HCT116 (cell line): ENCODE measurements at regions of chr11 and their contacts with region 1.

Region 1: DNA sequence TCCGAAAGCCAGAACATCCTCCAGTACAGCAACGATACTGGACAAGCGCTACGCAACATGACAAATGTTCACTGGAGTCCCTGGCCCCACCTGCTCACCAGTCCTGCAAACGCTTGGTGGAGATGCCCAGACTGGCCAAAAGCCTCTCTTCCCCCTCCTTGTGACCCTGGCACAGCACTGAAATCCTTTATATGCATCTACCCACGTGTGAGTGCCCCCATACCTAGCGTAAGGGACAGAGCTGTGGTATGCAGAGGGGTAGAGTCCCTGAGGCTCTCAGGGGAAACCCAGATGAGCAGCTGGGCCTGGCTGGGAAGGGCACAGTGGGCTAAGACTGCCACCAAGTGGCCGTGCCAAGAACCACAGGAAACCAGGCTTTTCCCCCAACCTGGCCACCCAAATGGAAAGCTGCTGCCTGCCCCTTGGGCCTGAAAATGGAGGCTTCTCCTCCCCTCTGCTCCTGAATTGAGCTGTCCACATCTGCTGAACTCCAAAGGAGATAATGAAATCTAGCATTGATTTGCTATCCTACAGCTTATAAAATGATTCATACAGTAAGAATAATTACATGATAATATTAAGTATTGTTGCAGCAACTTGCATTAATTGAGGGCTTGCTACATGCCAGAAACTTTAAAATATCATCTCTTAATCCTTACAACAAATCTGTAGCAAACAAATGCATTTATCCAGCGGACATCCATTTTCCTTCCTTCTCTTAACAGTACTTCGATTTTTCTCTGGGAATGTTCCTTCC is 24.8 kb upstream of the TTC12 start:
- DNase-seq: peak; percentile 21
- ATAC-seq: peak; percentile 96
- H3K4me3 ChIP-seq: no peak overlapping the region
- H3K27ac ChIP-seq: no peak overlapping the region
- H3K4me1 ChIP-seq: no peaks in the 10 kb centered on the region
- H3K27me3 ChIP-seq: peaks cover 44% of the 10 kb centered on the region
- CTCF ChIP-seq: peak; percentile 60 to 90 (median 88)
- POLR2A ChIP-seq: no peak
- RAD21 ChIP-seq: peak; percentile 90

Region 2: DNA sequence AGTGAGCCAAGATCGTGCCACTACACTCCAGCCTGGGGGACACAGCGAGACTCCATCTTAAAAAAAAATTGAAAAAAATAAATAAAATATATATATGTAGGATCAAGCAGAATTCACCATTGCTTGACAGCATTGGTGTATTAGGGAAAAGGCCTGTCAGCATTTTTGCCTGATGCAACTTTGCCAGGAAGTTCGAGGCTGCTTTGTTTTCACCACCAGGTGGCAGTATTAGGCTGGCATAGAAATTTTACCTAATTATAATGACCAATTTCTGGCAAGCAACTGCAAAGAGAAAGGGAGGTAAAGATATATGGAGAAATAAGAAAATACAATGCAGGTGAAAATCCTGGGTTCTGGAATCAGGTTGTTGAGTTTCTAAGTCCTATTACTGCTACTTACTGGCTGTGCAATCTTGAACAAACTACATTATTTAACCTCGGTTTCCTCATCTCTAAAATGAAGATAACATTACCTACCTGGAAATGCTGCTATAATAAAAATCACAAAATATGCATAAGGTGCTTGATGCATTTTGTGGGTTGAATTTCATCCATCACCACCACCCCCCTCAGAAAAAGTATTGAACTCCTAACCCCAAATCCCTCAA is 1724.4 kb before region 1 on chr11:
- CTCF ChIA-PET with region 1: no interaction called
- POLR2A ChIA-PET with region 1: no interaction called
- RAD21 ChIA-PET with region 1: no interaction called
- intact Hi-C with region 1: loop called (anchors 10 kb)
- DNase-seq: peak; percentile 63
- ATAC-seq: peak; percentile 70
- H3K4me3 ChIP-seq: no peak overlapping the region
- H3K27ac ChIP-seq: no peak overlapping the region
- H3K4me1 ChIP-seq: peaks cover 0 to 7% of the 10 kb centered on the region in 2 experiments; a peak in 1 of 4 replicates
- H3K27me3 ChIP-seq: no peaks in the 10 kb centered on the region
- CTCF ChIP-seq: peak; percentile 81 to 87 (median 84)
- POLR2A ChIP-seq: no peak
- RAD21 ChIP-seq: peak; percentile 91

Region 3: GRCh38 chr11:112795142-112795815 is 494.3 kb before region 1 on chr11:
- CTCF ChIA-PET with region 1: interaction called, 10 read pairs
- POLR2A ChIA-PET with region 1: no interaction called
- RAD21 ChIA-PET with region 1: no interaction called
- intact Hi-C with region 1: loop called (anchors 5 kb)
- DNase-seq: peak; percentile 38
- ATAC-seq: peak; percentile 97
- H3K4me3 ChIP-seq: no peak overlapping the region
- H3K27ac ChIP-seq: no peak overlapping the region
- H3K4me1 ChIP-seq: no peaks in the 10 kb centered on the region
- H3K27me3 ChIP-seq: 0 out of 2 replicates have a peak, but pooled peaks cover 5% of the 10 kb centered on the region
- CTCF ChIP-seq: peak; percentile 69 to 91 (median 82); a peak in 5 of 6 replicates
- POLR2A ChIP-seq: no peak
- RAD21 ChIP-seq: peak; percentile 67

Region 4: DNA sequence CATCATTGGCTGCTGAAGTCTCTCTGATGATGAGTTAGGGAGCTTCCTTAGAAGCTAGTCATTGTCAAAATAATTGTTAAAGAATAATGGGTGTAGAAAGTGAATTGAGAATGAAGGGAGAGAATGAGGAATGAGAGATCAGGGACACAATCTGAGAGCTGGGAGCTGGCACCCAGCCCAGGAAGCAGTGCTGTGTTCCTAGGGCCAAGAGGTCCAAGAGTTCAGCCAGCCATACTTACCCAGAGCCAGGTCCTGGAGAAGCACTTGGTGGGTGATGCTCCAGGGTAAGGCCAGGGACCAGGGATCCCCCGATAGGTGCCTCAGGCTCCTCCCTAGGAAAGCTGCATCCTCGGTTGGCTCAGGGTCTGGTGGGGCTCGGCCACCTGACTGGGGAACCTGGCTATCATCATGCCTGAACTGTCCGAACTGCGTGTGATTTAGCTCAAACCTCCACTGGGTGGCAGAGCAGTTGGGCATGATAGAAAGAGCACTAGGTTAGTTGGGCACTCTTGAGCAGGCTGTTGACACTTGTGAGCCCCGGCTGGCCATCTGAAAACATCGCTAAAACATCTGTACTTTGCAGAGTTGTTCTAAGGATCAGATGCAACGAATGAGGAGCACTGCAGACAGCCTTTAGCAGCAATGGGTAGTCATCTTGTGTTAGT is 452.3 kb before region 1 on chr11:
- CTCF ChIA-PET with region 1: no interaction called
- POLR2A ChIA-PET with region 1: no interaction called
- RAD21 ChIA-PET with region 1: no interaction called
- intact Hi-C with region 1: loop called (anchors 2 kb)
- DNase-seq: peak; percentile 6
- ATAC-seq: peak; percentile 83
- H3K4me3 ChIP-seq: no peak overlapping the region
- H3K27ac ChIP-seq: no peak overlapping the region
- H3K4me1 ChIP-seq: no peaks in the 10 kb centered on the region
- H3K27me3 ChIP-seq: peaks cover 30% of the 10 kb centered on the region
- CTCF ChIP-seq: peak; percentile 14 to 33 (median 31); a peak in 2 of 6 replicates
- POLR2A ChIP-seq: no peak
- RAD21 ChIP-seq: peak; percentile 38; the same call in 1 of the 2 replicates

Region 5: DNA sequence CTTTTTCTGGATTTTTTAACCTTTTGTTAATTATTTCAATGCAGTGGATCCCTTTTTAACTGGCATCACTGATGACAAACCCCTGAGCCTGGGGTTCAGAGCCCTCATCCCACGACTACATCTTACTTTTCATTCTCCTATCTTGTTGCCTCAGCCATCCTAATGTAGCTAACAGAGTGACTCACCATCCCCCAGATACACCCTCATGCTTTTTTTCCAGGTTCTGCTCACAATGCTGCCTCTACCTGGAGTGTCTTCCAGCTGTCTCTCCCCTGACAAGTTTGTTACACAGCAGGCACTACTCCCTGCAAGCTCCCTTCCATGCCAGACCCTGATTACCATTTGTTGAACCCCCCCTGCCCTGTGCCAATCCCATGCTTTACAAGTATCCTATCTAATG is 193.0 kb before region 1 on chr11:
- CTCF ChIA-PET with region 1: no interaction called
- POLR2A ChIA-PET with region 1: no interaction called
- RAD21 ChIA-PET with region 1: no interaction called
- intact Hi-C with region 1: no loop called
- DNase-seq: no peak
- ATAC-seq: no peak
- H3K4me3 ChIP-seq: no peak overlapping the region
- H3K27ac ChIP-seq: no peak overlapping the region
- H3K4me1 ChIP-seq: no peaks in the 10 kb centered on the region
- H3K27me3 ChIP-seq: peaks cover 30% of the 10 kb centered on the region
- CTCF ChIP-seq: no peak
- POLR2A ChIP-seq: no peak
- RAD21 ChIP-seq: no peak